ENCODE measurements at regions of chr10 and their contacts with region 1.

Region 1: GRCh38 chr10:77173615-77174461 is 463.8 kb downstream of the KCNMA1 start:
- DNase-seq: peak; percentile 72 to 81
- ATAC-seq: peak; percentile 82 to 91 (median 88)
- H3K4me3 ChIP-seq: no peak overlapping the region
- H3K27ac ChIP-seq: no peak overlapping the region
- H3K4me1 ChIP-seq: no peaks in the 10 kb centered on the region
- H3K27me3 ChIP-seq: no peaks in the 10 kb centered on the region
- CTCF ChIP-seq: peak; percentile 88

Region 2: GRCh38 chr10:75744261-75744660 is 1429.6 kb before region 1 on chr10:
- intact Hi-C with region 1: no loop called
- DNase-seq: no peak
- ATAC-seq: no peak
- H3K4me3 ChIP-seq: no peak overlapping the region
- H3K27ac ChIP-seq: no peak overlapping the region
- H3K4me1 ChIP-seq: no peaks in the 10 kb centered on the region
- H3K27me3 ChIP-seq: peaks cover 0 to 4% (median 0%) of the 10 kb centered on the region in 3 donors
- CTCF ChIP-seq: no peak

Region 3: DNA sequence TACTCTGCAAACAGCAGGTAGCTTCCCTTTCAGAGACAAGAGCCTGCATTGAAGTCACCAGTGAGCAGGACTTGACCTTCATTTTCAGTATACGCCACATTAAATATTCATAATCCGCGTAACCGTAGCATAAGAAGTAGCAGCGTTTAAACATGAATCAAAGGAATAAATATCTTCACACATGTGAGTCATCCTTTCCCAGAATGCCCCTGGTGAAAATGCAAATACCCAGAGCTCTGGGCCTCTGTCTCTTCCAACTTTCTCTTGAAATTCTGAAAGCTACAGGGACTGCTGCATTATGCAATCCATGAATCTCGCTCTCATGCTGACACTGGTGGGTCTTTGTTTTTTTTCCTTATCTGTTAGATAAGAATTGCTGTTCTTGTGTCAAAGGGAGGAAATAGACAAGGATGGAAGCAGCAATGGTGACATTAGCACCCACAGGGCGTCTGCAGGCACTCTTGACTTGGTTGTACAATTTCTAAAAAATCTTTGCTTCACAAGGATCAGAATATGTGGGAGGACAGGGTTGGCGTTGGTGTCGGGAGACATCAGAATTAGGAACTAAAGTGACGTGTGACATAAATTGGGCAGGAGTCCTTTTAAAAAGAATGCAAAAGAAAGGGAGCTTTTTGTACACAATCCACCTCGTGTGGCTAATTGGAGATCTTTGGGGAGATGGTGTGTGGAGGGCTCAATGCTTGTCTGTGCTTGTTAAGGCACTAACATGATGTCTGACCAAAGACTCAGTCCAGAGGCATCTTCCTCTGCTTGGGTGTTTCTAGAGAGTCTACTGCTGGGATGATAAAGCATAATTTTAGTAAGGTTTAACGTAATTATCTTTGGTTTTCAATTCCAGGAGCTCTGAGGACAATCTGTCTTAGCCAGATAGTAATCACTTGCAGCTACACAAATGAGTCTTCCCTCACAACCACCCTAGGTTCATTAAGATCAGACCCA is 73.5 kb after region 1 on chr10:
- intact Hi-C with region 1: loop called (anchors 2 to 5 kb)
- DNase-seq: no peak
- ATAC-seq: no peak
- H3K4me3 ChIP-seq: no peak overlapping the region
- H3K27ac ChIP-seq: no peak overlapping the region
- H3K4me1 ChIP-seq: peaks cover 2% of the 10 kb centered on the region
- H3K27me3 ChIP-seq: no peaks in the 10 kb centered on the region
- CTCF ChIP-seq: no peak

Region 4: DNA sequence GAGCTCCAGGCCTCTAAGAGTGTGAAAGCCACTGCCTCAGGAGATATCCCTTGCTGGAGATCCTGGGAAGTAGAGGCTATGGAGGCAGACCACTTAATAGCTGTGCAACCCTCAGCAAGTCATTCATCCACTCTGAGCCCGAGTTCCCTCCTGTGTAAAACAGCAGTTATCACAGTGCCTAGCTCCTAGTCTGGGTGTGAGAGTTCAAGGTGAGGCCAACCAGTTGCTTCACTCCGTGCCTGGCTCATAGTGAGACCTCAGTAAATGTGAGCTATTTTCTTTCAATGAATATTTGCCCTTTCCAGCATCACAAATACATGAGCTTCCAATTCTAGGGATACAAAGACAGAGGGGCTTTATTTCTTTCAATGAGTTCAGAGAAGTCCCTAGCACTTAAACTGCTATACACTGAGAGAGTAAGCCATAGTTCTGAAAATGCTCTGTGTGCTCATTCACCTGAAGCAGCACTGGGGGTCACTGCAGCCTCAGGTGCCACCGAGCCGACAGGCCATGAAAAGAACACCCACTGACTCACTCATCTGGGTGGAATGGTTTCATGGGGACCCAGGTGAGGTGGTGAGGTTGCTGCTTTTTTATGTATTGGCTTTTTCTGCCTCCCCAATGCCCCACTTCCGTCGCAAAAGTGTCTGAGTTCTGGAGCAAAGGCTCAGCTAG is 204.0 kb after region 1 on chr10:
- intact Hi-C with region 1: loop called in 1 of 2 experiments (anchors 10 kb)
- DNase-seq: no peak
- ATAC-seq: peak in 3 of 4 donors; percentile 20 to 62 (median 56)
- H3K4me3 ChIP-seq: no peak overlapping the region
- H3K27ac ChIP-seq: no peak overlapping the region
- H3K4me1 ChIP-seq: no peaks in the 10 kb centered on the region
- H3K27me3 ChIP-seq: no peaks in the 10 kb centered on the region
- CTCF ChIP-seq: no peak

Region 5: GRCh38 chr10:77494327-77494726 is 320.5 kb after region 1 on chr10:
- intact Hi-C with region 1: loop called (anchors 2 to 10 kb)
- DNase-seq: no peak
- ATAC-seq: no peak
- H3K4me3 ChIP-seq: no peak overlapping the region
- H3K27ac ChIP-seq: no peak overlapping the region
- H3K4me1 ChIP-seq: peaks cover 66% of the 10 kb centered on the region
- H3K27me3 ChIP-seq: no peaks in the 10 kb centered on the region
- CTCF ChIP-seq: peak; percentile 31

Region 6: DNA sequence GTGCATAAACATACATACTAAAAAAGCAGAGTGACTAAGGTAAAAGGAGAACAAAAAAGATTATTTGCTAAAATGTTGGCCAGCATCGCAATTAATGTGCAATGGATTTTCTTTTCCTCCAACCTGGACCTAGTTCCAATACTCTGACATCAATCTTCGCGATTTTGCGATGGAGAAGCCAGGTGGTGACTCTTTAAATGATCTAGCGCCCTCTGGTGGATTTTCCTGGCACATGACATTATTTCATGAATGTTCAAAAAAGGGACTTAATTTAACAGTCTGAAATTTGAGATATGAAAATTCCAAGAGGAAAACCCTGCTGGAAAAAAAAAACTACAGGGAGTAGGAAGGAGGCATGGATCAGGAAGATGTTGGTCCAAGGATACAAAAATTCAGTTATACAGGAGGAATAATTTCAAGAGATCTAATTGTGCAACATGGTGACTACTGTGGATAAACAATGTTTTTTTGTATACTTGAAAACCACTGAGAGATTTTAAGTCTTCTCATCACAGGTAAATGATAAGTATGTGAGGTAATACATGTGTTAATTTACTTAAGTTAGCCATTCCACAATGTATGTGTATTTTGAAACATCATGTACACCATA is 468.1 kb after region 1 on chr10:
- intact Hi-C with region 1: loop called (anchors 2 kb)
- DNase-seq: no peak
- ATAC-seq: peak in 3 of 4 donors; percentile 32 to 55 (median 43)
- H3K4me3 ChIP-seq: no peak overlapping the region
- H3K27ac ChIP-seq: no peak overlapping the region
- H3K4me1 ChIP-seq: peaks cover 2% of the 10 kb centered on the region
- H3K27me3 ChIP-seq: peaks cover 0 to 4% (median 3%) of the 10 kb centered on the region in 3 donors
- CTCF ChIP-seq: peak; percentile 88

Region 7: DNA sequence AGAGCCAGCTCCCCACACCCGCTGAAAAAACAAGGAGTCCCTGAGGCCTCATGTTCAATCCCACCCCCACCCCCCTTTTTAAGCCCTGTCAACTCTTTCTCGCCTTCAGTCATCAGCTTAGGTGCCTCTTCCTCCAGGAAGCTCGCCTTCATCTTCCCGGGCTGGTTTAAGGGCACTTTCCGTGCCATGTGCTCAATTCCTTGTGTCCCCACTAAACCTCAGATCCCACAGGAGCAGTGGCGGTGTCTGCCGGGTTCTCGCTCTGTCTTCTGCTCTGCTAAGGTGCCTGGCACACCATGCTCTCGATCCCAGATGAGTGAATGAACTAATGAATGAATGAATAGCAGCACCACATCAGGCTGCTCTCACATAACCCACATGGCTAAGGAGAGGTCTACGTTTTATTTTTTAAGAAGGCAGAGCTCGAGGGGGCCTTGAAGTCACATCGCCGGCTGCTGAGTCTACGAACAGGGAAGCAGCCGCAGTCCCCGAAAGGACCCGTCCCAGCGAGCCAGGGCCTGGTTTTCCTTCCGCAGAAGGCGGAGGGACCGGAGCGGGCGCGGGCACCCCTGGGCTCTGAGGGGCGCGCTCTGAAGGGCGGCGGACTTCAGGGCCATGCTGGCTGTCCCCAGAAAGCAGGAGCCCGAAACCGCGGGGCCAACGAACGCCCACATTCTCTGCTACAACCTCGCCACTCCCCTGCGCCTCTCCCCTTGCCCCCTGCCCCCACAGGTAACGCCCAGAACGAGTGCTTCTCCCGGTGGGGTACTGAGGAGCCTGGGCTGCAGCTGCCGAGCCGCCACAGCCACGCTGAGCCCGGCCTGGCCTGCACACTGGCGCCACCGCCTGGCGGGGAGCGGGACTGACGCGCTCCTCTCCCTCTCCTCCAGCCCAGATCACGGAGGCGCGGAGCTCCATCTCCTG is 537.2 kb after region 1 on chr10:
- intact Hi-C with region 1: loop called (anchors 5 to 10 kb)
- DNase-seq: peak; percentile 69 to 86
- ATAC-seq: peak; percentile 95 to 100 (median 98)
- H3K4me3 ChIP-seq: peak overlapping the region; percentile 63
- H3K27ac ChIP-seq: no peak overlapping the region
- H3K4me1 ChIP-seq: no peaks in the 10 kb centered on the region
- H3K27me3 ChIP-seq: peaks cover 0 to 24% (median 0%) of the 10 kb centered on the region in 3 donors
- CTCF ChIP-seq: peak; percentile 94